ENCODE measurements at regions of chr19 and their contacts with region 1.

Region 1: DNA sequence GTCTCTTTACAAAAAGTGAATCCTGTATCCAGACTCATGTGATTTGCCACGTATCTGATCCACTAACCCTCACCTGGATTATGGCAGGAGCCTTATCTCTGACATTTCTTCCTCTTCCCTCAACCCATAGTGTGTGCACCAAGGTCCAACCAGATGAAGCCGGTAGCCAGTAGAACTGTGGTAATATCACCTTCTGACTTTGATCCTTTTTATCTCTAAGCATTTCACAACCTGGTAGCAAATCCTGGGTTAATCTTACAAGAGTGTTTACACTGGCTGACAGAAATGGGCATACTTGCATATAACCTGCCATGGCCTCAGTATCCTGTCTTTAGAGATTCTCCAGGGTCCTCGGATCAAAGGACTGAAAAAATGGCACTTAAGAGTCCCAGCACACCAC is 1.9 kb downstream of the ZNF417 start:
- DNase-seq: no peak
- ATAC-seq: no peak
- H3K4me3 Mint-ChIP-seq: no peak overlapping the region
- H3K27ac Mint-ChIP-seq: no peak overlapping the region
- H3K4me1 Mint-ChIP-seq: peaks cover 27% of the 10 kb centered on the region
- H3K27me3 Mint-ChIP-seq: no peaks in the 10 kb centered on the region

Region 2: GRCh38 chr19:57389730-57390598 is 524.6 kb before region 1 on chr19 and contains the start of gene ZNF548:
- CTCF ChIA-PET with region 1: no interaction called
- POLR2A ChIA-PET with region 1: no interaction called
- intact Hi-C with region 1: loop called in 1 of 2 experiments (anchors 1 kb)
- DNase-seq: peak; percentile 97
- ATAC-seq: peak; percentile 99
- H3K4me3 Mint-ChIP-seq: peak within 1 kb of the TSS; percentile 90
- H3K27ac Mint-ChIP-seq: peak within 1 kb of the TSS; percentile 94
- H3K4me1 Mint-ChIP-seq: peaks cover 26% of the 10 kb centered on the region
- H3K27me3 Mint-ChIP-seq: no peaks in the 10 kb centered on the region
- total RNA-seq, gene ZNF548: 15.1 to 20.3 TPM

Region 3: GRCh38 chr19:57527136-57527881 is 387.2 kb before region 1 on chr19 and contains the start of gene ZNF549:
- CTCF ChIA-PET with region 1: no interaction called
- POLR2A ChIA-PET with region 1: no interaction called
- intact Hi-C with region 1: loop called in 1 of 2 experiments (anchors 1 kb)
- DNase-seq: peak; percentile 93
- ATAC-seq: peak; percentile 100
- H3K4me3 Mint-ChIP-seq: peak within 1 kb of the TSS; percentile 82
- H3K27ac Mint-ChIP-seq: peak within 1 kb of the TSS; percentile 84
- H3K4me1 Mint-ChIP-seq: peaks cover 18% of the 10 kb centered on the region
- H3K27me3 Mint-ChIP-seq: no peaks in the 10 kb centered on the region
- total RNA-seq, gene ZNF549: 3.7 to 4.6 TPM

Region 4: GRCh38 chr19:57682226-57682766 is 232.2 kb before region 1 on chr19:
- CTCF ChIA-PET with region 1: interaction called, 4 read pairs
- POLR2A ChIA-PET with region 1: no interaction called
- intact Hi-C with region 1: loop called in 1 of 2 experiments (anchors 1 kb)
- DNase-seq: no peak
- ATAC-seq: no peak
- H3K4me3 Mint-ChIP-seq: peak overlapping the region; percentile 85
- H3K27ac Mint-ChIP-seq: peak overlapping the region; percentile 93
- H3K4me1 Mint-ChIP-seq: peaks cover 31% of the 10 kb centered on the region
- H3K27me3 Mint-ChIP-seq: peaks cover under 1% of the 10 kb centered on the region

Region 5: GRCh38 chr19:57769345-57770131 is 145.0 kb before region 1 on chr19 and contains the start of gene ZNF586:
- CTCF ChIA-PET with region 1: no interaction called
- POLR2A ChIA-PET with region 1: no interaction called
- intact Hi-C with region 1: loop called in 1 of 2 experiments (anchors 1 kb)
- DNase-seq: peak; percentile 93
- ATAC-seq: peak; percentile 99
- H3K4me3 Mint-ChIP-seq: peak within 1 kb of the TSS; percentile 90
- H3K27ac Mint-ChIP-seq: peak within 1 kb of the TSS; percentile 93
- H3K4me1 Mint-ChIP-seq: peaks cover 25% of the 10 kb centered on the region
- H3K27me3 Mint-ChIP-seq: no peaks in the 10 kb centered on the region
- total RNA-seq, gene ZNF586: 20.3 to 20.5 TPM

Region 6: GRCh38 chr19:57850553-57851017 is 63.9 kb before region 1 on chr19:
- CTCF ChIA-PET with region 1: no interaction called
- POLR2A ChIA-PET with region 1: interaction called, 3 read pairs
- intact Hi-C with region 1: loop called in 1 of 2 experiments (anchors 2 kb)
- DNase-seq: peak; percentile 33
- ATAC-seq: no peak
- H3K4me3 Mint-ChIP-seq: peak overlapping the region; percentile 95
- H3K27ac Mint-ChIP-seq: peak overlapping the region; percentile 97
- H3K4me1 Mint-ChIP-seq: peaks cover 23% of the 10 kb centered on the region
- H3K27me3 Mint-ChIP-seq: no peaks in the 10 kb centered on the region